Tibial artery (tissue), 4 donors: ENCODE measurements at regions of chr11 and their contacts with region 1.

Region 1: DNA sequence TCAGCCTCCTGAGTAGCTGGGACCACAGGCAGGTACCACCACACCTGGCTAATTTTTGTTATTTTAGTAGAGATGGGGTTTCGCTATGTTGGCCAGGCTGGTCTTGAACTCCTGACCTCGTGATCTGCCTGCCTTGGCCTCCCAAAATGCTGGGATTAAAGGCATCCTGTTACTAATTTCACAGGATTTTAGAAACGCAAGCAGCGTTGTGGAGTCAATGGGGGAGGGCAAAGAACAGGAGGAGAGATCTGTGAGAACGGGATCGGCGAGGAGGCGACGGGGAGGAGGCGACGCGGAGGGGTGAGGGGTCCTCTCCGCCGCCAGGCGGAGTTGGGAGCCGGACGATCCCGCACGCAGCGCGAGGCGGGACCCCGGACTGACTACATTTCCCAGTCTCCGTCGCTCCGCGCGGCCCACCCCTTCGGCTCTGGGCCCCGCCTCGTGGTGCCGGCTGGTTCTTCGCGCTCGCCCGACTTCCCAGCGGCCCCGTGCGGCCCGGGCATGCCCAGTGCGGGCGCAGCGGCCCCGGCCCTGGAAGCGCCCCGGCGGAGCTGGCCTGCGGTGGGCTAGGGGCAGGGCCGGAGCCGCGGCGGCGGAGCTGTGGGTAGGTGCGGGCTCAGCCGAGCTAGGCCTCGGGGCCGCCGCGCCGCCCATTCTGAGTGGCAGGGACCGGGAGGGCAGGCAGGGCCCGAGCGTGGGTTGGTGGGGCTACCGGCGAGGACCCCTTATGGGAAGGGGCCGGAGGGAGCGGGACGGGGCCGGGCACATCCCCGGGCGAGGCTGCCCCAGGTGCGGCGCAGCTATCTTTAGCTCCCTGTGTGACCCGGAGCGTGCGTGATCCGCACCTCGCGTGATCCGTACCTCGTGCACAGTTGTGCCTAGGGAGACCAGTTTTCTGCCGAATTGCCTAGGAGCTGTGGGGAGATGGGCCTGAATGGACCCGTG is at the start of gene EI24:
- DNase-seq: peak; percentile 89 to 94
- H3K4me3 ChIP-seq: peak within 1 kb of the TSS; percentile 84 to 88
- H3K27ac ChIP-seq: peak within 1 kb of the TSS; percentile 83 to 94
- H3K4me1 ChIP-seq: peaks cover 0 to 22% (median 14%) of the 10 kb centered on the region in 4 donors
- H3K27me3 ChIP-seq: no peaks in the 10 kb centered on the region
- CTCF ChIP-seq: peak; percentile 76 to 77

Region 2: DNA sequence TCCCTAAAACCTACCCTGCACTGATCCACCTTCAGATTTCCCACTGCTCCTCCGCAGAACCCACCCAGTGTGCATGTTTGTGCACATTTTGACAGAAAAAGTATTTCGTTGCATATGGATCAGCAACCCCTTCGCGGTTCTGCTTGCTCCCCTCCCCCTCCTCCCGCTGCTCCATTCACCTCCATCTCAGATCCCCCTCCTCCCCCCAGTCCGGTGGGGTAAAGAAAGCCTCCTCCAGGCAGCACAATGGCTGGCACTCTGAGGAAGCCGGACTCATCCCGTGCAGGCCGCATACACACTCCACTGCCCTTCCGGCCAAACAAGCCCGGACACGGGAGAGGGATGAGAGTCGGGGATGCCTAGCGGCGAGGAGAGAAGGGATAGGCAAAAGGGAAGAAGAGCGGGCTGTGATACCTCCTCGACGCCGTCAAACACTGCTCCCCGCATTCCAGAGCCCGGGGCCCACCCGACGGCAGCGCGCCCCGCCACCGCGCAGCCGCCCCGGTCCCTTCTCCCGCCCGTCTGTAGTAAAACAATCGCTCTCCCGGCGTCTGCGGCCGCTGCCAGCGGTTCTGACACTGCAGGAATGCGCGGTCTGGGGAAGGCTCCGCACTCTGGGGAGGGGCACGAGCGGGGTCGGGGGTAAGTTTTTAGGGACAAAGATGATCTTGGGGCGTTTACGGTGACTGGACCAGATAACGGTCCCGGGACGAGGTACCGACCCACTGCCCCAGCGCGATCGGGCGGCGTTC is 74.1 kb before region 1 on chr11:
- intact Hi-C with region 1: loop called (anchors 10 kb)
- DNase-seq: peak; percentile 47 to 68
- H3K4me3 ChIP-seq: peak overlapping the region; percentile 77 to 82
- H3K27ac ChIP-seq: peak overlapping the region; percentile 72 to 88
- H3K4me1 ChIP-seq: peaks cover 0 to 18% (median 10%) of the 10 kb centered on the region in 4 donors
- H3K27me3 ChIP-seq: no peaks in the 10 kb centered on the region
- CTCF ChIP-seq: no peak